ENCODE measurements at regions of chr5 and their contacts with region 1.

Region 1: GRCh38 chr5:154228696-154229095 is 38.2 kb downstream of the GALNT10 start:
- DNase-seq: no peak
- ATAC-seq: peak; percentile 66
- H3K4me3 Mint-ChIP-seq: peak overlapping the region; percentile 20
- H3K27ac Mint-ChIP-seq: no peak overlapping the region
- H3K4me1 Mint-ChIP-seq: peaks cover 26% of the 10 kb centered on the region
- H3K27me3 Mint-ChIP-seq: no peaks in the 10 kb centered on the region

Region 2: DNA sequence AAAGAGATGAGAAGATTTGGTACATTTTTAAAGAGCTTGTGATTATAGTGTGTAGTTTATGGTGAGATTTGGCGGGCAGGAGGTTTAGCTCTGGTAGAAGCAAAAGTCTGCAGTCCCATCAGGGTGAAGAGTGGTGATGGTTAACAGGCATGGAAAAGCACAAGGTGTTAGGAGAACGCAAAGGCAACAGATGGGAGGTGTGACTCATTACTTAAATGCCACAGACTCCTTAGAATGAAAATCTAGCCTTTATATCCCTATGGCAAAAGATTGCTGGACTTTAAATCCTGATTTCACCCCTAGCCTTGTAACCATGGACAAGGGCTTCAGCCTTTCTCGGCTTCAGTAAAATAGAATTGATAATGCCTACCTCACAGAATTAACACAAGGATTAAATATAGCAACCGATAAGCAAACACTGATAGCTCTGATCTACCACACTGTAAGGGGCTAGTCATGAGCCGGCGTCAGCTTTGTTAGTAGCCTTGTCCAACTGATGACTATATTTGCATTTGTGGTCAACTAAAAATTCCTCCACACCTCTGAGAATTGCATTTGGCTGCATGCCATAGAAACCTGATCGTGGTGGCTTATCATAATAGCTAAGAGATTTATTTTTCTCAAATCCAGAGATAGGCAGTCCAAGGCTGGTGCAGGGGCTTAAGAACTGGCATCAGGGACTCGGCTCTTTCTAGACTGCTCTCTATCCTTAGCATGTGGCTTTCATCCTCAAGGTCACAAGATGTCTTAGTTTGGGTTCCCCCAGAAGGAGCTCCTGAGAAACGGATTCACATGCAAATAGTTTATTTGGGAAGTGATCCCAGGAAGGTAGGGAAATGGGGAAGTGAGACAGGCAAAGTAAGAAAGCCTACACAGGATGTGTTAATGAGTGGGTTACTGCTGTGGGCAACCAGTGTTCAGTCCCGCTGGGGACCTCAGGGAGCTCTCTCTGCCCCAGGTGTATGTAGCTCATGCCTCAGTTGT is 170.3 kb before region 1 on chr5:
- CTCF ChIA-PET with region 1: no interaction called
- POLR2A ChIA-PET with region 1: no interaction called
- intact Hi-C with region 1: no loop called
- DNase-seq: no peak
- ATAC-seq: no peak
- H3K4me3 Mint-ChIP-seq: no peak overlapping the region
- H3K27ac Mint-ChIP-seq: no peak overlapping the region
- H3K4me1 Mint-ChIP-seq: peaks cover 4% of the 10 kb centered on the region
- H3K27me3 Mint-ChIP-seq: no peaks in the 10 kb centered on the region

Region 3: DNA sequence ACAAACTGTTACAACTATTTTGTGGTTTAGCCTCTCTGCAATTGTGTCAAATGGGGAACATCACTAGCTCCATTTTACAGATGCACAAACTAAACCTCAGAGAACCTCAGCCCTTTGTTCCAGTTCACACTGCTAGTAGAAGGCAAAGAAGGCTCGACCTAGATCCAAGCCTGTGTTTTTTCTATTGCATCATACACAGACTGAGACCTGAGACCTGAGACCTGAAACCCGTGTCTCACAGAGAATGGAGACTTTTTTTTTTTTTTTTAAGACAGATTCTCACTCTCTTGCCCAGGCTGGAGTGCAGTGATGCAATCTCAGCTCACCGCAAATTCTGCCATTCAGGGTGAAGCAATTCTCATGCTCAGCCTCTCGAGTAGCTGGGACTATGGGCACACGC is 82.7 kb after region 1 on chr5:
- CTCF ChIA-PET with region 1: no interaction called
- POLR2A ChIA-PET with region 1: no interaction called
- intact Hi-C with region 1: loop called in 1 of 2 experiments (anchors 5 kb)
- DNase-seq: peak; percentile 66
- ATAC-seq: peak; percentile 92
- H3K4me3 Mint-ChIP-seq: no peak overlapping the region
- H3K27ac Mint-ChIP-seq: peak overlapping the region; percentile 53
- H3K4me1 Mint-ChIP-seq: peaks cover 32% of the 10 kb centered on the region
- H3K27me3 Mint-ChIP-seq: no peaks in the 10 kb centered on the region